HepG2 (cell line): ENCODE measurements at regions of chr6 and their contacts with region 1.

Region 1: GRCh38 chr6:96626759-96627364 is 63.9 kb downstream of the FHL5 start:
- DNase-seq: peak; percentile 21
- ATAC-seq: peak; percentile 82
- H3K4me3 ChIP-seq: no peak overlapping the region
- H3K27ac ChIP-seq: no peak overlapping the region
- H3K4me1 ChIP-seq: no peaks in the 10 kb centered on the region
- H3K27me3 ChIP-seq: no peaks in the 10 kb centered on the region
- CTCF ChIP-seq: peak; percentile 40
- EP300 ChIP-seq: no peak
- POLR2A ChIP-seq: no peak
- RAD21 ChIP-seq: 0 out of 2 replicates have a peak, but pooled peaks have one; percentile 29

Region 2: DNA sequence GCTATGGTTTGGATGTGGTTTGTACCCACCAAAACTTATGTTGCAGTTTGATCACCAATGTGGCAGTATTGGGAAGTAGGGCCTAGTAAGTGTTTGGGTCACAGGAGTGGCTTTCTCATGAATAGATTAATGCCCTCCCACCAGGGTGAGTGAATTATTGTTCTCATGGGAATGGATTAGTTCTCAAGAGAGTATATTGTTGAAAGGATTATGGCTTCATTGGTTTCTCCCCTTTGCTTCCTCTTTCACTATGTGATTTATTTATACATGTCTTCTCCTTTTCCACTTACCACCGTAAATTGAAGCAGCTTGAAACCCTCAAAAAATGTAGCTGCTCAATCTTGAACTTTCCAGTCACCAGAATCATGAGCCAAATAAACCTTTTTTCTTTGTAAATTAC is 94.5 kb before region 1 on chr6:
- CTCF ChIA-PET with region 1: no interaction called
- POLR2A ChIA-PET with region 1: no interaction called
- in situ Hi-C with region 1: no loop called
- intact Hi-C with region 1: no loop called
- DNase-seq: no peak
- ATAC-seq: no peak
- H3K4me3 ChIP-seq: no peak overlapping the region
- H3K27ac ChIP-seq: no peak overlapping the region
- H3K4me1 ChIP-seq: no peaks in the 10 kb centered on the region
- H3K27me3 ChIP-seq: no peaks in the 10 kb centered on the region
- CTCF ChIP-seq: no peak
- EP300 ChIP-seq: no peak
- POLR2A ChIP-seq: no peak
- RAD21 ChIP-seq: no peak

Region 3: GRCh38 chr6:96563853-96564252 is 63.0 kb before region 1 on chr6:
- CTCF ChIA-PET with region 1: no interaction called
- POLR2A ChIA-PET with region 1: no interaction called
- in situ Hi-C with region 1: no loop called
- intact Hi-C with region 1: no loop called
- DNase-seq: no peak
- ATAC-seq: no peak
- H3K4me3 ChIP-seq: no peak overlapping the region
- H3K27ac ChIP-seq: no peak overlapping the region
- H3K4me1 ChIP-seq: 0 out of 2 replicates have a peak, but pooled peaks cover 3% of the 10 kb centered on the region
- H3K27me3 ChIP-seq: no peaks in the 10 kb centered on the region; a peak in 1 of 5 replicates
- CTCF ChIP-seq: no peak
- EP300 ChIP-seq: no peak
- POLR2A ChIP-seq: no peak
- RAD21 ChIP-seq: no peak

Region 4: GRCh38 chr6:96611342-96611991 is 15.4 kb before region 1 on chr6:
- CTCF ChIA-PET with region 1: no interaction called
- POLR2A ChIA-PET with region 1: no interaction called
- in situ Hi-C with region 1: no loop called
- intact Hi-C with region 1: no loop called
- DNase-seq: no peak
- ATAC-seq: no peak
- H3K4me3 ChIP-seq: no peak overlapping the region
- H3K27ac ChIP-seq: no peak overlapping the region
- H3K4me1 ChIP-seq: no peaks in the 10 kb centered on the region
- H3K27me3 ChIP-seq: no peaks in the 10 kb centered on the region
- CTCF ChIP-seq: no peak
- EP300 ChIP-seq: no peak
- POLR2A ChIP-seq: no peak
- RAD21 ChIP-seq: no peak

Region 5: GRCh38 chr6:97053643-97054411 is 427.0 kb after region 1 on chr6:
- CTCF ChIA-PET with region 1: interaction called, 14 read pairs
- POLR2A ChIA-PET with region 1: no interaction called
- in situ Hi-C with region 1: loop called (anchors 5 kb)
- intact Hi-C with region 1: loop called (anchors 1 kb)
- DNase-seq: no peak
- ATAC-seq: no peak
- H3K4me3 ChIP-seq: no peak overlapping the region
- H3K27ac ChIP-seq: no peak overlapping the region
- H3K4me1 ChIP-seq: peaks cover 9% of the 10 kb centered on the region; the same call in 1 of the 2 replicates
- H3K27me3 ChIP-seq: no peaks in the 10 kb centered on the region
- CTCF ChIP-seq: no peak
- EP300 ChIP-seq: no peak
- POLR2A ChIP-seq: no peak
- RAD21 ChIP-seq: no peak